Psoas muscle (tissue), 8 donors: ENCODE measurements at regions of chr15 and their contacts with region 1.

Region 1: GRCh38 chr15:89087830-89088604 is at the start of gene ABHD2:
- DNase-seq: peak; percentile 99
- ATAC-seq: peak; percentile 84 to 86 (median 85)
- H3K4me3 ChIP-seq: peak within 1 kb of the TSS; percentile 97
- H3K27ac ChIP-seq: peak within 1 kb of the TSS; percentile 98
- H3K4me1 ChIP-seq: peaks cover 65% of the 10 kb centered on the region
- H3K27me3 ChIP-seq: no peaks in the 10 kb centered on the region
- CTCF ChIP-seq: no peak
- total RNA-seq, gene ABHD2: 66.1 to 215 (median 157) TPM

Region 2: GRCh38 chr15:88913017-88913849 is 174.8 kb before region 1 on chr15 and contains the start of gene MFGE8:
- intact Hi-C with region 1: loop called in 1 of 2 experiments (anchors 5 kb)
- DNase-seq: peak; percentile 85 to 93
- ATAC-seq: peak; percentile 69 to 76 (median 74)
- H3K4me3 ChIP-seq: peak within 1 kb of the TSS; percentile 92
- H3K27ac ChIP-seq: peak within 1 kb of the TSS; percentile 93
- H3K4me1 ChIP-seq: peaks cover 54% of the 10 kb centered on the region
- H3K27me3 ChIP-seq: no peaks in the 10 kb centered on the region
- CTCF ChIP-seq: no peak
- total RNA-seq, gene MFGE8: 137 to 771 (median 335) TPM

Region 3: GRCh38 chr15:89171136-89172072 is 83.4 kb after region 1 on chr15:
- intact Hi-C with region 1: loop called in 1 of 2 experiments (anchors 5 kb)
- DNase-seq: no peak
- ATAC-seq: no peak
- H3K4me3 ChIP-seq: no peak overlapping the region
- H3K27ac ChIP-seq: no peak overlapping the region
- H3K4me1 ChIP-seq: peaks cover 25% of the 10 kb centered on the region
- H3K27me3 ChIP-seq: no peaks in the 10 kb centered on the region
- CTCF ChIP-seq: peak; percentile 63